Endothelial cell of umbilical vein (primary cell): ENCODE measurements at regions of chr4 and their contacts with region 1.

Region 1: GRCh38 chr4:21830272-21830671 is 118.3 kb downstream of the KCNIP4 start:
- DNase-seq: peak; percentile 50
- H3K4me3 ChIP-seq: no peak overlapping the region
- H3K27ac ChIP-seq: no peak overlapping the region
- H3K4me1 ChIP-seq: peaks cover 2% of the 10 kb centered on the region
- H3K27me3 ChIP-seq: no peaks in the 10 kb centered on the region
- CTCF ChIP-seq: no peak
- POLR2A ChIP-seq: no peak

Region 2: GRCh38 chr4:21802406-21802805 is 27.9 kb before region 1 on chr4:
- CTCF ChIA-PET with region 1: interaction called, 3 read pairs
- POLR2A ChIA-PET with region 1: no interaction called
- dilution Hi-C with region 1: no loop called
- intact Hi-C with region 1: loop called (anchors 1 kb)
- DNase-seq: peak; percentile 89
- H3K4me3 ChIP-seq: peak overlapping the region in 1 of 3 experiments; percentile 32
- H3K27ac ChIP-seq: peak overlapping the region; percentile 92
- H3K4me1 ChIP-seq: peaks cover 17% of the 10 kb centered on the region
- H3K27me3 ChIP-seq: no peaks in the 10 kb centered on the region
- CTCF ChIP-seq: no peak
- POLR2A ChIP-seq: no peak

Region 3: DNA sequence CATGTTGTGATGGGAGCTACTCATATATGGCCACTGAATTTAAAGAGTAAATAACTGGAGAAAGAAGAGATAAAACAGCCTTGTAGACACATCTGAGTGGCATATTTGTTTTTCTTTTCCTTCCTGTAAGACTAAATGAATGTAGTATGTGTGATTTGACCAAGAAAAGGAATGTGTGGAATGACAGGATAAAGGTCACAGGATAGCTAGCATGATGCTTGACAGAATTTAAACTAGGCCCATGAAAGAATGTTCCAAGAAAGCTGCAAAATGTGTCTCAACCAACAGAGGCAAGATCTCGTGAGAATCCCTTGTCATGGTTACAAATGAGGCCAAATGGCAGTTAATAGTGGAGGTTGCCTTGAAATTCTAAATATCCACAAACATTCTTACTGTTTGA is 18.7 kb before region 1 on chr4:
- CTCF ChIA-PET with region 1: interaction called, 10 read pairs
- POLR2A ChIA-PET with region 1: no interaction called
- dilution Hi-C with region 1: no loop called
- intact Hi-C with region 1: no loop called
- DNase-seq: peak; percentile 22
- H3K4me3 ChIP-seq: no peak overlapping the region
- H3K27ac ChIP-seq: no peak overlapping the region
- H3K4me1 ChIP-seq: peaks cover 6% of the 10 kb centered on the region
- H3K27me3 ChIP-seq: no peaks in the 10 kb centered on the region
- CTCF ChIP-seq: no peak
- POLR2A ChIP-seq: no peak

Region 4: GRCh38 chr4:22190855-22191254 is 360.6 kb after region 1 on chr4:
- CTCF ChIA-PET with region 1: no interaction called
- POLR2A ChIA-PET with region 1: no interaction called
- dilution Hi-C with region 1: no loop called
- intact Hi-C with region 1: no loop called
- DNase-seq: no peak
- H3K4me3 ChIP-seq: no peak overlapping the region
- H3K27ac ChIP-seq: no peak overlapping the region
- H3K4me1 ChIP-seq: no peaks in the 10 kb centered on the region
- H3K27me3 ChIP-seq: no peaks in the 10 kb centered on the region
- CTCF ChIP-seq: no peak
- POLR2A ChIP-seq: no peak